Breast epithelium (tissue), 4 donors: ENCODE measurements at regions of chr3 and their contacts with region 1.

Region 1: GRCh38 chr3:17683542-17684207 is 58.8 kb downstream of the TBC1D5 start:
- DNase-seq: no peak
- H3K4me3 ChIP-seq: no peak overlapping the region
- H3K27ac ChIP-seq: no peak overlapping the region
- H3K4me1 ChIP-seq: no peaks in the 10 kb centered on the region
- H3K27me3 ChIP-seq: no peaks in the 10 kb centered on the region
- CTCF ChIP-seq: no peak
- POLR2A ChIP-seq: no peak

Region 2: DNA sequence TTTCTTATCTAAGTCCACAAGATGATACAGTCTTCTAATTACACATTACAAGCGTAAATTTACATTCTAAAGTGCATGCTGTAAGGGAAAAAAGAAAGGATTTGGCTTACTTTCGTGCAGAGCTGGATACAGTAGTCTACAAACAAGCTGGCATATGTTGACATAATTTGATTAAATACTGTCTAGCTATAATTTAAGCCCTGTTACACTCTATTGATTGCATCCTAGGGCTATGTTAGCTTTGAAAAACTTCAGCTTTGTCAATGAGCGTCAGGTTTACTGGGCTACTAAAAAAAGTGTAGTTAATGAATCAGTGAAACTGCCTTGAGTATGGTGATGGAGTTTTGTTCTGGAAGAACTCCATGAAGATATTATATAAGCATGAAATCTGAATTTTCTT is 823.4 kb before region 1 on chr3:
- intact Hi-C with region 1: no loop called
- DNase-seq: no peak
- H3K4me3 ChIP-seq: no peak overlapping the region
- H3K27ac ChIP-seq: no peak overlapping the region
- H3K4me1 ChIP-seq: no peaks in the 10 kb centered on the region
- H3K27me3 ChIP-seq: no peaks in the 10 kb centered on the region
- CTCF ChIP-seq: no peak
- POLR2A ChIP-seq: no peak

Region 3: GRCh38 chr3:17742108-17742879 is 58.6 kb after region 1 on chr3 and contains the start of gene TBC1D5:
- intact Hi-C with region 1: no loop called
- DNase-seq: peak; percentile 90 to 92
- H3K4me3 ChIP-seq: peak within 1 kb of the TSS; percentile 68 to 89 (median 78)
- H3K27ac ChIP-seq: peak within 1 kb of the TSS; percentile 91 to 98
- H3K4me1 ChIP-seq: peaks cover 0 to 5% of the 10 kb centered on the region in 2 donors
- H3K27me3 ChIP-seq: no peaks in the 10 kb centered on the region
- CTCF ChIP-seq: no peak
- POLR2A ChIP-seq: peak; percentile 73
- total RNA-seq, gene TBC1D5: 70.1 to 109 (median 90.1) TPM

Region 4: DNA sequence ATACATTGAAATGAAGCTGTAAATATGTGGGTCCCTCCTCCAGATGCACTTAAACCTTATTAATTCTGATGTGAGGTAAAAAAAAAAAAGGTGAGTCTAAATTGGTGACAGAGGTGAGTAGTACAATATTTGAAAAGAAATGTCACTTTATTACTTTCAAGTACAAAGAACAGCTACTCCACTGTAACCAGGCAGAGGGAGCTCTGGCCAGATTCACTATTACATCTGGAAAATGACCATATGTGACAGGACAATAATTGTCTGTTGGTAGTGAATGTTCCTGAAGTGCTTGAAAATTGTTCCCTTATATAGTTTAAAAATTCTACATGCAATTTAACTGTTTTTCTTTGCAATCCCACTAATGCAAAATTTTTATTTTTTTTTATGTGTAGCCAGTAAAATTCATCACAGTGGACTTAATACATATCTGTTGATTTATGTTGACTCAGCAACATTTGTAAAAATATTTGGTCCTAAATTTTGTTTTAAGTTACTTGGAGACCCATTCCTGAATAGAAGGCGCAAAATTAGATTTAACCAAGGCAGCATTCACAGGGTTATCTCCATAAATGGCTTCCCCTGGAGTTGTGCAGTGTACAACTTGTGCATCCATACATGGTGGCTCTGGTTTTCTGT is 290.6 kb after region 1 on chr3:
- intact Hi-C with region 1: loop called (anchors 5 kb)
- DNase-seq: no peak
- H3K4me3 ChIP-seq: no peak overlapping the region
- H3K27ac ChIP-seq: no peak overlapping the region
- H3K4me1 ChIP-seq: no peaks in the 10 kb centered on the region
- H3K27me3 ChIP-seq: no peaks in the 10 kb centered on the region
- CTCF ChIP-seq: no peak
- POLR2A ChIP-seq: no peak